ENCODE measurements at regions of chr16 and their contacts with region 1.

Region 1: GRCh38 chr16:69720822-69721430 is 5.4 kb downstream of the NQO1 start:
- DNase-seq: no peak
- H3K4me3 ChIP-seq: no peak overlapping the region
- H3K27ac ChIP-seq: no peak overlapping the region
- H3K4me1 ChIP-seq: peaks cover 0 to 11% (median 3%) of the 10 kb centered on the region in 4 experiments
- H3K27me3 ChIP-seq: no peaks in the 10 kb centered on the region

Region 2: DNA sequence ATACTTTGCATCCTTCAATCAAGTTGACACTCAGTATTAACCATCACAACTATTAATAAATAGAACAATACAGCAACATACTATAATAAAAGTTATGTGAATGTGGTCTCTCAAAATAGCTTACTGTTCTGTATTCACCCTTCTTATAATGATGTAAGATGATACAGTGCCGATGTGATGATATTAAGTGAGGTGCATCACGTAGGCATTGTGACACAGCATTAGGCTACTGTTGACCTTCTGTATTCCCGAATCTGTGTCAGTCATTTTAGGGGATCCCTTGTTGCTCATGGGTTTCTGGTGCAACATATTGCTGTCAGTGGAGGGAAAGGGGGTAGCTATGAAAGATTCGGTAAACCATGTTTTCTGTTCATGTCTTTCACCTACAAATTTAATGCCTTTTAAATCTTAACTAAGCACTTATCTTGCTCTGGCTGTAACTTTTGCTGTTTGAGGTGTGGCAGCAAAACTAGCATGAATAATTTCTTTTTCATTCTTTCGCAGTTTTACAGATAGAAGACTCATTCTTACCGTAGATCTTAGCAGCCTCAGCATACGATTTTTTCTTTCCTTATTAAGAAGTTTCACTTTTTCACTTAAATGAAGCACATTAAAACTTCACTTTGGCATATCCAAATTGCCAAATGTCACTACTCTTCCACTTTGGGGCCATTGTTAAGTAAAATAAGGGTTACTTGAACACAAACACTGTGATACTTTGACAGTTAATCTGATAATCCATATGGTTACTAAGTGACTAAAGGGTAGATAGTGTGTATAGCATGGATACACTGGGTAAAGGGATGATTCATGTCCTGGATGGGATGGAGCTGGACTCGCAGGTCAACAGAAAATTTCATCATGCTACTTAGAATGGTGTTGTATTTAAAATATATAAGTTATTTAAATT is 125.5 kb before region 1 on chr16:
- CTCF ChIA-PET with region 1: no interaction called
- POLR2A ChIA-PET with region 1: no interaction called
- DNase-seq: no peak
- H3K4me3 ChIP-seq: no peak overlapping the region
- H3K27ac ChIP-seq: no peak overlapping the region
- H3K4me1 ChIP-seq: no peaks in the 10 kb centered on the region
- H3K27me3 ChIP-seq: no peaks in the 10 kb centered on the region

Region 3: DNA sequence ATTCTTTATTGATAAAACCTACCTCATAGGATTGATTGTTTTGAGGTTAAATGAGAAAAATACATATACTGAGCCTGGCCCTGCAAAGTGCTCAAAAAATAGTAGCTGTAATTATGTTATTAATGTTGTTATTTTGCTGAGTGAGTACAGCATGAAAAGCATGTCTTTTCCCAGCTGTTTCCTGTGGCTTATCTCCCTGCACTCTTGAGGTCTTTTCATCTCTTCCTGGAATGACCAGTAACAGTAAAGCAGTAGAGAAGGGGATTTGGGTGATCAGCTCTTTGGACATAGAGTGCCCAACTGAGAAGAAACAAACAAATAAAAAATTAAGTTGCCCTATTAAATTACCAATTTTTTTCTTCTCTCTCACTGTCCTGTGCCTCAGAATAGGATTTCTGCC is 101.4 kb before region 1 on chr16:
- CTCF ChIA-PET with region 1: no interaction called
- POLR2A ChIA-PET with region 1: no interaction called
- DNase-seq: peak in 2 of 3 donors; percentile 37 to 59
- H3K4me3 ChIP-seq: no peak overlapping the region
- H3K27ac ChIP-seq: no peak overlapping the region
- H3K4me1 ChIP-seq: peaks cover 4 to 21% (median 14%) of the 10 kb centered on the region in 4 experiments
- H3K27me3 ChIP-seq: no peaks in the 10 kb centered on the region

Region 4: GRCh38 chr16:69632836-69633235 is 88.1 kb before region 1 on chr16:
- CTCF ChIA-PET with region 1: no interaction called
- POLR2A ChIA-PET with region 1: no interaction called
- DNase-seq: no peak
- H3K4me3 ChIP-seq: no peak overlapping the region
- H3K27ac ChIP-seq: no peak overlapping the region
- H3K4me1 ChIP-seq: no peaks in the 10 kb centered on the region
- H3K27me3 ChIP-seq: no peaks in the 10 kb centered on the region

Region 5: GRCh38 chr16:69709456-69710084 is 11.4 kb before region 1 on chr16:
- CTCF ChIA-PET with region 1: interaction called, 12 read pairs
- POLR2A ChIA-PET with region 1: no interaction called
- DNase-seq: peak; percentile 64 to 80 (median 78)
- H3K4me3 ChIP-seq: no peak overlapping the region
- H3K27ac ChIP-seq: no peak overlapping the region
- H3K4me1 ChIP-seq: no peaks in the 10 kb centered on the region
- H3K27me3 ChIP-seq: no peaks in the 10 kb centered on the region